ENCODE measurements at regions of chr2 and their contacts with region 1.

Region 1: GRCh38 chr2:175690113-175690837 is 311.8 kb downstream of the LNPK start:
- DNase-seq: peak; percentile 54
- ATAC-seq: no peak
- H3K4me3 Mint-ChIP-seq: no peak overlapping the region
- H3K27ac Mint-ChIP-seq: no peak overlapping the region
- H3K4me1 Mint-ChIP-seq: no peaks in the 10 kb centered on the region
- H3K27me3 Mint-ChIP-seq: peaks cover 12% of the 10 kb centered on the region

Region 2: GRCh38 chr2:176096986-176097819 is 406.9 kb after region 1 on chr2:
- CTCF ChIA-PET with region 1: interaction called, 80 read pairs
- POLR2A ChIA-PET with region 1: no interaction called
- DNase-seq: peak; percentile 68
- ATAC-seq: peak; percentile 79
- H3K4me3 Mint-ChIP-seq: peak overlapping the region; percentile 52
- H3K27ac Mint-ChIP-seq: no peak overlapping the region
- H3K4me1 Mint-ChIP-seq: peaks cover 14% of the 10 kb centered on the region
- H3K27me3 Mint-ChIP-seq: peaks cover 81% of the 10 kb centered on the region